WTC11 (cell line): ENCODE measurements at regions of chr6 and their contacts with region 1.

Region 1: GRCh38 chr6:3410385-3411360 is 46.2 kb downstream of the SLC22A23 start:
- DNase-seq: peak; percentile 88
- ATAC-seq: peak; percentile 79
- H3K4me3 Mint-ChIP-seq: no peak overlapping the region
- H3K27ac Mint-ChIP-seq: peak overlapping the region; percentile 89
- H3K4me1 Mint-ChIP-seq: peaks cover 73% of the 10 kb centered on the region
- H3K27me3 Mint-ChIP-seq: no peaks in the 10 kb centered on the region
- CTCF ChIP-seq: peak; percentile 88

Region 2: DNA sequence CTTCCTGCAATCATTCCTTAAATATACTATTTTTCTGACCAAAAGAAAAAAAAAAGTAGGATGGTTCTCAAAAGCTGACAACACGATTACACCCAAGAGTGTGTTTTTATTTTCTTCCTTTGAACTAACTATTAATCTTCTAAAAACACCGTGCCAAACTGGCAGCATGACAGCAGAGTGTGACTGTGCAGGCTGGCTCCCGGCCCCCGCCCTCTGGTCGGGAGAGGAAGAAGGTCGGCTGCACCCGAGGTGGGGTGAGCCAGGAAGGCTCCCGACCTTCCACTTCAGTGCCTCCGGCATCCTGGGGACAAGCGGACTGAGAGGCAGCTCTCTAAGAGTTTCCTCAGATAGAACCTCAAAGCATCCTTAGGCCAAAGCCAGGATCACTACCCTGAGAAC is 17.0 kb after region 1 on chr6:
- CTCF ChIA-PET with region 1: interaction called, 13 read pairs
- POLR2A ChIA-PET with region 1: no interaction called
- DNase-seq: no peak
- ATAC-seq: no peak
- H3K4me3 Mint-ChIP-seq: no peak overlapping the region
- H3K27ac Mint-ChIP-seq: peak overlapping the region; percentile 47; the same call in 1 of the 2 replicates
- H3K4me1 Mint-ChIP-seq: peaks cover 90% of the 10 kb centered on the region
- H3K27me3 Mint-ChIP-seq: no peaks in the 10 kb centered on the region
- CTCF ChIP-seq: no peak

Region 3: GRCh38 chr6:3456755-3457466 is 46.2 kb after region 1 on chr6 and contains the start of gene SLC22A23:
- CTCF ChIA-PET with region 1: interaction called, 10 read pairs
- POLR2A ChIA-PET with region 1: interaction called, 3 read pairs
- DNase-seq: peak; percentile 82
- ATAC-seq: peak; percentile 60
- H3K4me3 Mint-ChIP-seq: peak within 1 kb of the TSS; percentile 80
- H3K27ac Mint-ChIP-seq: peak within 1 kb of the TSS; percentile 41; the same call in 1 of the 2 replicates
- H3K4me1 Mint-ChIP-seq: peaks cover 35% of the 10 kb centered on the region
- H3K27me3 Mint-ChIP-seq: peaks cover 5% of the 10 kb centered on the region; the same call in 1 of the 2 replicates
- CTCF ChIP-seq: peak; percentile 91
- total RNA-seq, gene SLC22A23: 33.6 to 38.2 TPM (median 33.8 TPM) in 3 replicates

Region 4: DNA sequence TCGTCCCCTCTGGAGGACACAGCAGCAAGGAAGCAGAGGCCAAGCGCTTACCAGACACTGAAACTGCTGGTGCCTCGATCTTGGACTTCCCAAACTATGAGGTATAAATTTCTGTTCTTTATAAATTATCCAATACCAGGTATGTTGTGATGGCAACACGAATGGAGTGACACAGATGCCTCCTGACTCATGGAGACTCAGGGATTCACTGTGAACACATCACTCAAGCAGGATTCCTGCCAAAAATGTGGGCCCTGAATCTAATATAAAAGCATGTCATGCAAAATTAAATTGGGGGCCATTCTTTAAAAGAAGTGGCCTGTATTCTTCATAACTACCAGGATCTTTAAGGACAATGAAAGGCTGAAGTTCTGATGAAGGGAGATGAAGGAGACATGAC is 98.7 kb after region 1 on chr6:
- CTCF ChIA-PET with region 1: interaction called, 14 read pairs
- POLR2A ChIA-PET with region 1: no interaction called
- DNase-seq: no peak
- ATAC-seq: no peak
- H3K4me3 Mint-ChIP-seq: no peak overlapping the region
- H3K27ac Mint-ChIP-seq: no peak overlapping the region
- H3K4me1 Mint-ChIP-seq: peaks cover 21% of the 10 kb centered on the region
- H3K27me3 Mint-ChIP-seq: peaks cover 3% of the 10 kb centered on the region; the same call in 1 of the 2 replicates
- CTCF ChIP-seq: no peak